Caki2 (cell line): ENCODE measurements at regions of chr20 and their contacts with region 1.

Region 1: GRCh38 chr20:63274381-63275228 is 2.0 kb downstream of the ARFGAP1 start:
- DNase-seq: no peak

Region 2: GRCh38 chr20:63223221-63224207 is 51.1 kb before region 1 on chr20:
- in situ Hi-C with region 1: loop called (anchors 5 kb)
- DNase-seq: peak; percentile 47